B cell (primary cell): ENCODE measurements at regions of chr2 and their contacts with region 1.

Region 1: GRCh38 chr2:37039580-37039979 is 44.6 kb downstream of the HEATR5B start:
- DNase-seq: no peak
- ATAC-seq: no peak
- H3K4me3 ChIP-seq: no peak overlapping the region
- H3K4me3 Mint-ChIP-seq: no peak overlapping the region
- H3K27ac ChIP-seq: no peak overlapping the region
- H3K27ac Mint-ChIP-seq: no peak overlapping the region
- H3K4me1 ChIP-seq: no peaks in the 10 kb centered on the region
- H3K4me1 Mint-ChIP-seq: no peaks in the 10 kb centered on the region
- H3K27me3 ChIP-seq: no peaks in the 10 kb centered on the region
- H3K27me3 Mint-ChIP-seq: no peaks in the 10 kb centered on the region
- CTCF ChIP-seq: no peak

Region 2: GRCh38 chr2:36173760-36174404 is 865.7 kb before region 1 on chr2:
- CTCF ChIA-PET with region 1: no interaction called
- POLR2A ChIA-PET with region 1: no interaction called
- intact Hi-C with region 1: no loop called
- DNase-seq: no peak
- ATAC-seq: no peak
- H3K4me3 ChIP-seq: no peak overlapping the region
- H3K4me3 Mint-ChIP-seq: no peak overlapping the region
- H3K27ac ChIP-seq: no peak overlapping the region
- H3K27ac Mint-ChIP-seq: no peak overlapping the region
- H3K4me1 ChIP-seq: no peaks in the 10 kb centered on the region
- H3K4me1 Mint-ChIP-seq: no peaks in the 10 kb centered on the region
- H3K27me3 ChIP-seq: no peaks in the 10 kb centered on the region
- H3K27me3 Mint-ChIP-seq: no peaks in the 10 kb centered on the region
- CTCF ChIP-seq: no peak

Region 3: GRCh38 chr2:37005118-37005868 is 34.3 kb before region 1 on chr2:
- CTCF ChIA-PET with region 1: no interaction called
- POLR2A ChIA-PET with region 1: no interaction called
- intact Hi-C with region 1: loop called (anchors 5 kb)
- DNase-seq: peak; percentile 46
- ATAC-seq: peak; percentile 65
- H3K4me3 ChIP-seq: peak overlapping the region in 2 of 5 experiments; percentile 6 to 18
- H3K4me3 Mint-ChIP-seq: peak overlapping the region; percentile 74
- H3K27ac ChIP-seq: peak overlapping the region in 1 of 2 donors; percentile 57
- H3K27ac Mint-ChIP-seq: peak overlapping the region; percentile 86
- H3K4me1 ChIP-seq: peaks cover 13 to 17% of the 10 kb centered on the region in 2 donors
- H3K4me1 Mint-ChIP-seq: peaks cover 14% of the 10 kb centered on the region
- H3K27me3 ChIP-seq: no peaks in the 10 kb centered on the region
- H3K27me3 Mint-ChIP-seq: no peaks in the 10 kb centered on the region
- CTCF ChIP-seq: peak; percentile 49

Region 4: GRCh38 chr2:37215250-37215649 is 175.7 kb after region 1 on chr2:
- CTCF ChIA-PET with region 1: no interaction called
- POLR2A ChIA-PET with region 1: no interaction called
- intact Hi-C with region 1: no loop called
- DNase-seq: no peak
- ATAC-seq: no peak
- H3K4me3 ChIP-seq: no peak overlapping the region
- H3K4me3 Mint-ChIP-seq: no peak overlapping the region
- H3K27ac ChIP-seq: no peak overlapping the region
- H3K27ac Mint-ChIP-seq: peak overlapping the region; percentile 32
- H3K4me1 ChIP-seq: no peaks in the 10 kb centered on the region
- H3K4me1 Mint-ChIP-seq: no peaks in the 10 kb centered on the region
- H3K27me3 ChIP-seq: no peaks in the 10 kb centered on the region
- H3K27me3 Mint-ChIP-seq: no peaks in the 10 kb centered on the region
- CTCF ChIP-seq: no peak